Ovary (tissue), 10 donors: ENCODE measurements at regions of chr3 and their contacts with region 1.

Region 1: DNA sequence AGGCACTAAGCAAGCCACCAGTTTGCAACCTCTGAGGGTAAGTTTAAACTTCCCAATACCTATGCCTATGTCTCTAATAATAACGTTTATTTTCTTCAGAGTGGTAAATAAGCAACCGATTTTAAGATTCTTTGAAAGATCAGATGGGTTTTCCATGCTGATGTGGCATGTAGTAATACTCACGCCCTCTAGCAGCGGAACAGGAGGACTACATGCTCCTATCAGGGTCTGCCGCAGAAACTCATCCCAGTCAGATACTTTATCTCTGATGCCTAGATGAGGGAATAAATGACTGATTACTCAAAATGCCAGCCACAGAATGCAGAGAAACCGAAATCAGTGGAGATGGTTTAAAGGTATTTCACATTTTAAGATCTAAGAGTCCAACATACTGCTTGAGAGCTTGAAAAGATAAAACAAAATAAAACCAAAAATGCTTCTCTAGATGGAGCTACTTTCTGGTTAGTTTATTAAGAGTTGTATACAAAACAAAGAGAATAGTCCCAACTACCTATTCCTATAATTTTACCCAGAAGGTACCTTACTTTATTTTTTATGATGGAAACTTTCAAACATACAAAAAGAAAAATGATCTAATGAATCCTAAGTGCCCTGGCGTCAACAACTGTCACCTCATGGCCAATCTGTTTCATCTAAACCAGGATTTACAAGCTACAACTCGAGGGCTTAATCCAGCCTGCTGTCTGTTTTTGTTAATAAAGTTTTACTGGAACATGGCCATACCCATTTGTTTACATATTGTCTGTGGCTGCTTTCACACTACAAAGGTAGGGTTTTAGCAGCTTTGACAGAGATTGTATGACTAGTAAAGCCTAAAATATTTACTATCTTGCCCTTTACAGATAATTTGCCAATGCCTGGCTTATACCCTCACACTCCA is 37.5 kb upstream of the STIMATE start:
- DNase-seq: peak; percentile 17 to 47 (median 25)
- H3K4me3 ChIP-seq: no peak overlapping the region
- H3K27ac ChIP-seq: no peak overlapping the region
- H3K4me1 ChIP-seq: no peaks in the 10 kb centered on the region
- H3K27me3 ChIP-seq: no peaks in the 10 kb centered on the region
- CTCF ChIP-seq: peak; percentile 38 to 52 (median 42)
- EP300 ChIP-seq: no peak
- POLR2A ChIP-seq: no peak

Region 2: DNA sequence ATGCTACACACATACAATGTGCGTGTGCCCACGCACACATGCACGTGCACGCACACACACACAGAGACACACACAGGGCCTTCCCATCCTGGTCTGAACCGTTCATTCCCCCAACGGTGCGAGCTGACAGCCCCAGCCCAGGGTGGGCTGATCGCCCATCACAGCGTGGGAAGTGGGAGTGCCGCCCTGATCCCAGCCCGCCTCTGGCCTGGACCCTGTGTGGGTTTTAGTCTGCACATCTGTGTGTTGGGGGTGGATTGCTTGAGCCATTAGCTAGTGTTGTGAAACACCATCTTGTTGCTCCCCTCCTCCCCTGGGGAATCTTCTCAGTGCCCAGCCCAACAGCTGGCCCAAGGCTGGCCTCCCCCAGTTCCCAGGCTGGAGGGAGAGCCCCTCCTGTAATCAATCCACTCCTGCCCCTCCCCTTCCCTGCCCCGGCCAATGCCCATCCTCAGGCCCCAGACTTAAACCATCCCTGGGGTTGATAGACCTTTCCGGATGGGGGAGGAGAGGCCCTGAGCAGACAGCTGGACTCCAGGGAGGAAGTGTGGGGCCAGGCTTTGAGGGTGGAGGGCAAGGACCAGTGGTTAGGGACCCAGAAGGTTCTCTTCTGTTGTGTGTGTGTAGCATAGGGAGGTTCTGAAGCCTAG is 498.3 kb before region 1 on chr3:
- intact Hi-C with region 1: loop called in 1 of 4 experiments (anchors 10 kb)
- DNase-seq: peak in 3 of 5 donors; percentile 21 to 44 (median 31)
- H3K4me3 ChIP-seq: no peak overlapping the region
- H3K27ac ChIP-seq: no peak overlapping the region
- H3K4me1 ChIP-seq: peaks cover 10% of the 10 kb centered on the region
- H3K27me3 ChIP-seq: no peaks in the 10 kb centered on the region
- CTCF ChIP-seq: no peak
- EP300 ChIP-seq: no peak
- POLR2A ChIP-seq: no peak